Activated T-helper 2 cell treated with anti-CD3 and anti-CD28 coated beads, Interferon-gamma antibody, Interleukin-2, Interleukin-4, amounts not matched to agents 10 μg/mL and 5 μg/mL and 100 μg/mL, durations not matched to agents 14 hours and 24 hours and 36 hours (primary cell): ENCODE measurements at regions of chrX and their contacts with region 1.

Region 1: GRCh38 chrX:17944833-17945497 is 83.9 kb upstream of the RAI2 start:
- DNase-seq: no peak
- H3K4me3 Mint-ChIP-seq: no peak overlapping the region
- H3K27ac Mint-ChIP-seq: no peak overlapping the region
- H3K4me1 Mint-ChIP-seq: no peaks in the 10 kb centered on the region
- H3K27me3 Mint-ChIP-seq: no peaks in the 10 kb centered on the region

Region 2: DNA sequence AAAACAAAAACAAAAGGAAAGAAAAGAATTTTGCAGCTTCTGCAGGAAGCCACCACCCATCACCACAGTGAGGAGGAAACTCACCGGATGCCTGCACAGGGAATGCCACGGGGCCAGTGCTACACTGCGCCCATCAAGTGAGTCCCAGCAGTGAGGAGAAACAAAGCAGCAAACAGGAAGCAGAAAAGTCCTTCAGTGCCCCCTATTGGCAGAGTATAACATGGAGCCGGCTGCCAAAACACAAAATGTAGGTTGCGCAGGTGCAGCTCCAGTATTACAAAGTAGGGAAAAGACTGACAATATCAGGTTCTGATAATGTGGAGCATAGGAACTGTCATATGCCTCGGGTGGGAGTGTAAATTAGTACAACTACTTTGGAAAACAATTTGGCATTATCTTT is 432.8 kb after region 1 on chrX:
- intact Hi-C with region 1: loop called (anchors 10 kb)
- DNase-seq: no peak
- H3K4me3 Mint-ChIP-seq: no peak overlapping the region
- H3K27ac Mint-ChIP-seq: no peak overlapping the region
- H3K4me1 Mint-ChIP-seq: peaks cover 2% of the 10 kb centered on the region
- H3K27me3 Mint-ChIP-seq: peaks cover 2% of the 10 kb centered on the region